Posterior cingulate gyrus (tissue), 11 donors: ENCODE measurements at regions of chr3 and their contacts with region 1.

Region 1: GRCh38 chr3:136861890-136862616 is at the start of gene NCK1:
- DNase-seq: peak; percentile 99 to 100 (median 100)

Region 2: DNA sequence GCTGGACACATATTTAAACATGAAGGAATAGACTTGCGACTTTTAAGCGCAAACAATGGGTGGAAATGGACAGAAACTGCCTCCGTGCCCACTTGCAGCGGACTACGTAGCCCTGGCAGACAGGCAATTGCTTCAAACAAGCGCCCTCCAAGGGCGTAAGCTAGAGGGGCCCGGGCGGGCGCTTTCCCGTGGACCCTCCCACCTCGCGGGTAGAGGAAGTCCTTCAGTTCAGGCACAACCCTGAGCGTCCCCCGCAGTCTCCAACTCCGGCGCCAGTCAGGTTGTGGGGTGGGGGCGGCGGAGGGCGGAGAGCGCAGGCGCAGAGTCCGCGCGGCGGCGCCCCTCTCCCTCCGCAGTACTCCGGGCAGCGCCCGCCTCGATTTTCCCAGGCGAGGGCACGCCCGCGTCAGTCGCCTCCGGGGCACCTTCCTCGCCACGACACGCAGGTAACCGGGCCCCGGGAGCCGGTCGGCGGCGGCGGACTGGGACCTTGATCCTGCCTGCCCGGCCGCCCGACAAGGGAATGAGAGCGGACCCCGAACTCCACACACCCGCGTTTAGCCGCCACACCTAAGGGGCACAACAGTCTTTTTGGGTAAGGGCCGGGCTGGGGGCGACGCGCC is 43.2 kb before region 1 on chr3 and contains the start of gene SLC35G2:
- intact Hi-C with region 1: loop called (anchors 5 kb)
- DNase-seq: peak; percentile 38 to 95 (median 66)